K562 (cell line): ENCODE measurements at regions of chr17 and their contacts with region 1.

Region 1: DNA sequence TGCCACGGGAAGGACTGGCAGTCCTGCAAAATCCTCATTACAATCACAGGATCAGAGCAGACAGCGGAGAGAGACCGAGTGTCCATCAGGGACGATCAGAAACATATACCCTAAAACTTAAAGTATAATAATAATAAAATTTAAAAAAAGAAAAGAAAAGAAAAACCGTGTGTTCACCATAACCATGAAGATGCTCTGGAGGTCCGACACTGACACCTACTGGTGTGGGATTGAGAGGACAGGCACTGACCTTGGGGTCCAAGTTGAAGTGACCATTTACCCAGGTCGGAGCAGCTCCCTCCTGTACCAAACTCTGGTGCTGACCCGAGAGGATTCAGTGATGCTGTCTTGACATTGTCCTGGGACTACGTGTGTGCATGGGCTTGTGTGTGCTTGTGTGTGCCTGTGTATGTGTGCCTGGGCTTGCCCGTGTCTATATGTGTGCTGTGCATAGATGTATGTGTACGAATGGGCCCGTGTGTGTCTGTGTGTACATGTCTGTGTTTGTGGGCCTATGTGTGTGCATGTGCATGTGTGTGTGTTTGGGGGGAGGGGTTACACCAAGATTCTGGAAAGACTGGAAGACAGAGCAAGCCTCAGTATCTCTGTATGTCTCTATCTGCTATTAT is 10.0 kb upstream of the CD300LD start:
- DNase-seq: peak; percentile 65 to 74 (median 71)
- ATAC-seq: peak; percentile 90
- H3K4me3 ChIP-seq: no peak overlapping the region
- H3K27ac ChIP-seq: no peak overlapping the region
- H3K4me1 ChIP-seq: no peaks in the 10 kb centered on the region
- H3K27me3 ChIP-seq: peaks cover 3 to 51% of the 10 kb centered on the region in 2 experiments; a peak in 3 of 5 replicates
- CTCF ChIP-seq: peak; percentile 73 to 83 (median 81)
- EP300 ChIP-seq: no peak
- POLR2A ChIP-seq: no peak
- RAD21 ChIP-seq: peak; percentile 76 to 80

Region 2: GRCh38 chr17:74303305-74303704 is 298.8 kb before region 1 on chr17:
- CTCF ChIA-PET with region 1: no interaction called
- POLR2A ChIA-PET with region 1: no interaction called
- in situ Hi-C with region 1: no loop called
- intact Hi-C with region 1: loop called (anchors 5 kb)
- DNase-seq: no peak
- ATAC-seq: no peak
- H3K4me3 ChIP-seq: no peak overlapping the region
- H3K27ac ChIP-seq: no peak overlapping the region
- H3K4me1 ChIP-seq: peaks cover 3 to 7% of the 10 kb centered on the region in 2 experiments; a peak in 3 of 5 replicates
- H3K27me3 ChIP-seq: no peaks in the 10 kb centered on the region
- CTCF ChIP-seq: no peak
- EP300 ChIP-seq: no peak
- POLR2A ChIP-seq: no peak
- RAD21 ChIP-seq: no peak

Region 3: GRCh38 chr17:74379495-74380085 is 222.5 kb before region 1 on chr17:
- CTCF ChIA-PET with region 1: interaction called, 12 read pairs
- POLR2A ChIA-PET with region 1: interaction called, 4 read pairs
- in situ Hi-C with region 1: loop called (anchors 10 kb)
- intact Hi-C with region 1: loop called (anchors 2 kb)
- DNase-seq: peak; percentile 89 to 92 (median 90)
- ATAC-seq: peak; percentile 99
- H3K4me3 ChIP-seq: no peak overlapping the region
- H3K27ac ChIP-seq: no peak overlapping the region
- H3K4me1 ChIP-seq: peaks cover 0 to 10% of the 10 kb centered on the region in 2 experiments; a peak in 4 of 5 replicates
- H3K27me3 ChIP-seq: peaks cover 19 to 53% of the 10 kb centered on the region in 2 experiments
- CTCF ChIP-seq: peak; percentile 91 to 95 (median 95)
- EP300 ChIP-seq: no peak
- POLR2A ChIP-seq: no peak
- RAD21 ChIP-seq: peak; percentile 98 to 99

Region 4: GRCh38 chr17:74558882-74559519 is 43.1 kb before region 1 on chr17:
- CTCF ChIA-PET with region 1: no interaction called
- POLR2A ChIA-PET with region 1: no interaction called
- in situ Hi-C with region 1: no loop called
- intact Hi-C with region 1: no loop called
- DNase-seq: no peak
- ATAC-seq: no peak
- H3K4me3 ChIP-seq: no peak overlapping the region
- H3K27ac ChIP-seq: no peak overlapping the region
- H3K4me1 ChIP-seq: 0 out of 5 replicates have a peak, but pooled peaks cover 0 to 3% of the 10 kb centered on the region in 2 experiments
- H3K27me3 ChIP-seq: peaks cover 8 to 40% of the 10 kb centered on the region in 2 experiments; a peak in 4 of 5 replicates
- CTCF ChIP-seq: no peak
- EP300 ChIP-seq: no peak
- POLR2A ChIP-seq: no peak
- RAD21 ChIP-seq: no peak

Region 5: GRCh38 chr17:74654742-74655141 is 52.7 kb after region 1 on chr17:
- CTCF ChIA-PET with region 1: no interaction called
- POLR2A ChIA-PET with region 1: no interaction called
- in situ Hi-C with region 1: no loop called
- intact Hi-C with region 1: no loop called
- DNase-seq: no peak
- ATAC-seq: no peak
- H3K4me3 ChIP-seq: no peak overlapping the region
- H3K27ac ChIP-seq: no peak overlapping the region
- H3K4me1 ChIP-seq: no peaks in the 10 kb centered on the region
- H3K27me3 ChIP-seq: peaks cover 12 to 39% of the 10 kb centered on the region in 2 experiments; a peak in 4 of 5 replicates
- CTCF ChIP-seq: no peak
- EP300 ChIP-seq: no peak
- POLR2A ChIP-seq: no peak
- RAD21 ChIP-seq: no peak